ENCODE measurements at regions of chr9 and their contacts with region 1.

Region 1: DNA sequence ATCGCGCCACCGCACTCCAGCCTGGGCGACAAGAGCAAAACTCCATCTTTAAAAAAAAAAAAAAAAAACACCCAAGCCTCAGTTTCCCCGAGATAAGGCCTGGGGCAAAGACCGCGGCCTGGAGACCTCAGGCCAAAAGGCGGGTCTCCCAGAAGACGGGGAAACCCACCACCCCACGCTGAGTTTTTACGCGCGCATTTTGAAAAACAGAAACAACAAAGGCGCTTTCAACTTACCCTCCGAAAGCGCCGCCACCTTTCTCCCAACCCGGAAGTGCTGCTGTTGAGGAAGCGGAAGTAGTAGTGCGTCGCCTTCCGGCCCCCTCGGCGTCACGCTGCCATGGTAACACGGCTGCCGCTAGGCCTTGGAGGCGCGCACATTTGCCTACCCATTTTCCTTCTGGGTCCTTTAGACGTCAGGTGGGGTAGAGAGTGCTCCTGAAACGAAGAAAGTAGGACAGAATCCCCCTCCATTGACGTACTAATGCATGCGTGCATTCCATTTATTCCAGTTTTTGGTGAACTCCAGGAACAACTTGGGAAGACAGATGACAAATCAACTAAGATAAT is at the start of gene TTF1:
- DNase-seq: peak; percentile 95
- total RNA-seq, gene TTF1: 16.5 TPM

Region 2: DNA sequence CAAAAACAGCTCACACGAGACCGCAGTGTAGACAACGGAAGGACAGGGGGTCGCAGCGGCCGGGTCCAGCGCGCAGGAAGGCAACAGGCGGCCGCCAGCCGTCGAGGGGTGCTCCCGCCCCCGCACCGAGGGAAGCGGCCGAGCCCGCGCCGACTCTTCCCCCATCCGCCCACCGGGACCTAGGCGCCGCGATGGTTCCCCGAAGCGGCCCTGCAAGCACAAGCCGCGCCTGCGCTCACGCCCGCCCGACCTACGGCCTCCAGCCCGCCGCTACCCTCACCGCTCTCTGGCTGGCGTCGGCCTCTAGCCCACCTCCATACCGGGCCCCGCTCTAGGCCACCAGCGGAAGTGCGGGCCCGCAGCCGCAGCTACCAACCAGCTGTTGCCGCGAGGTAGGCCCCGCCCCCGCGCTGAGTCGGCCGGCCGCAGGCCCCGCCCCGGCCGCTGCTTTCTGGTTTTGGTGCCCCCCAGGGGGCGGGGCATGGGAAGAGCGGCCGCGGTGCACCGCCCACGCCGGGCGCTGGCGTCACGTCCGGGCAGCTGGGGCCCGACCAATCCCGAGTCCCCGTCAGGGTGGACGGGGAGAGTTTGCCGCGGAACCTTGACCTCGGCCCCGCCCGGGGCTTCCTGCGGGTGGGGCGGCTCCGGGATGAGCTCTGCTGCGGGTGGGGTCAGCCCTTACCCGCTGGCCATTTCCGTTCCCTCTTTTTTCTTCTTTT is 51.8 kb before region 1 on chr9 and contains the start of gene SETX:
- intact Hi-C with region 1: loop called (anchors 1 kb)
- DNase-seq: peak; percentile 99
- total RNA-seq, gene SETX: 30.0 TPM

Region 3: DNA sequence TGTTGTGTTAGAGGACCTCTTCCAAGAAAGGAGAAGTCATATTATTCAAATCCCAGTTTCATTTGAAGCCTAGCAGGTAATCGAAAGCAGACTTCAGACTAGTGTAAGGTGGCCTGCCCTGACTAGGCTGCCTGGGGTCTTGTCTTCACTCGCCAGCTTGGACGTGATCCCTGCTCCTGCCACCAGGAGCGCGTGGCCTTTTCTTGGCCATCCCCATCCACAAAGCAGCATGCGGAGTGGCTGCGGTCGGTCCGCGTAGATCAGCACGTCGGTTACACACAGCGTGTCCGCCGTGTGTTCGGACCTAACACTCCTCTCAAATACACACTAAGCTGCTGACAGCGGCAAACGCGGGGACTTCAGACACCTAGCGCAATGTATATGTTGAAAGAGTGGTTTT is 40.7 kb after region 1 on chr9:
- intact Hi-C with region 1: no loop called
- DNase-seq: no peak

Region 4: DNA sequence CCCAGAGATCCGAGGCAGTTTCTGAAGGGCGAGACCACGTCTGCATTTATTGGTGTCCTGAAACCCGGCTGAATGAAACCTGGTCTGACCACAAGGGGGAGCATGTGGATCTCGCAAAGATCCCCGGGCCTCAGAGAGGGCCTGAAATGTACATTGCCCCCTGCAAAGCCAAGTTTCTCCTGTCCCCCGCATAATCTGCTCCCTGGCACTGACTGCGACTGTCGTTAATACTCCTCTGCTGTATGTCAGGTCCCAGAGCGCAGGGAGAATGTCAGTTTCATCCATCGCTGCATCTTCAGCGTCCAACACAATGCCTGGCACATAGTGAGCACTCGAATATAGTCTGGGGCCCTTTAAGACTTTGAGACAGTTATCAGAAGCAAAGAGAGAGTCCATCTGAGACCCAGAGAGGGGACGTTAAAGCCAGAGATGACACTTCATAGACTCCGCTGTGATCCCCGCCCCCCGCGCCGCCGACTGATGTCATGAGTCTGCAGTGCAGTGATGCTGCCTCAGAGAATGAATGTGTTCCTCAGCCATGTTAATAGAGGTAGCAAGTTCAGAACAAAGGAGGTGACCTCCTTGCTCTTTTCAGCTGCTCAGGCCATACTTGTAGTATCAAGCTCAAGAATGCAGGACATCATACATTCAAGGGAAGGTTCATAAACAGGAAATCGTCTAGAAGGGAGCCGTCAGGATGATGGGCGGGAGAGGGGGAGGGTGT is 101.3 kb after region 1 on chr9:
- intact Hi-C with region 1: loop called (anchors 1 kb)
- DNase-seq: no peak

Region 5: GRCh38 chr9:132575005-132575609 is 168.5 kb after region 1 on chr9:
- intact Hi-C with region 1: loop called (anchors 2 kb)
- DNase-seq: peak; percentile 77

Region 6: GRCh38 chr9:132669698-132670456 is 263.2 kb after region 1 on chr9 and contains the start of gene DDX31:
- intact Hi-C with region 1: loop called (anchors 10 kb)
- DNase-seq: peak; percentile 92
- total RNA-seq, gene DDX31: 5.7 TPM

Region 7: GRCh38 chr9:132800038-132800648 is 393.5 kb after region 1 on chr9:
- intact Hi-C with region 1: loop called (anchors 2 kb)
- DNase-seq: peak; percentile 81